CD8-positive, alpha-beta T cell (primary cell): ENCODE measurements at regions of chr20 and their contacts with region 1.

Region 1: DNA sequence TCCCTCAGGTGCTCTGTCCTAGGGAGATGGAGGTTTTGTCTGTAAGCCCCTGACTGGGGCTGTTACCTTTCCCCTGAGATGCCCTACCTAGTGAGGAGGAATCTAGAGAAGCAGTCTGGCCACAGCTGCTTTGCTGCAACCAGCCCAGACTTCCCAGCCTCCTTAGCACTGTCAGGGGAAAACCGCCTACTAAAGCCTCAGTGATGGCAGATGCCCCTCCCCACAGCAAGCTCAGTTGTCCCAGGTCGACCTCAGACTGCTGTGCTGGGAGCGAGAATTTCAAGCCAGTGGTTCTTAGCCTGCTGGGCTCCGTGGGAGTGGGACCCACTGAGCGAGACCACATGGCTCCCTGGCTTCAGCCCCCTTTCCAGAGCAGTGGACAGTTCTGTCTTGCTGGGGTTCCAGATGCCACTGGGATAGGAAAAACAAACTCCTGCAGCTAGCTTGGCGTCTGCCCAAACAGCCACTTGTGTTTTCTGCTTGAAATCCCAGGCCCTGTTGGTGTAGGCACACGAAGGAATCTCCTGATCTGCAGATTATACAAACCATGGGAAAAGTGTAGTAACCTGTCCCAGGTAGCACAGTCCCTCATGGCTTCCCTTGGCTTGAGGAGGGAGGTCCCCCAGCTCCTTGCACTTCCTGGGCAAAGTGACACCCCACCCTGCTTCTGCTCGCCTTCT is 146.4 kb upstream of the PROKR2 start:
- DNase-seq: no peak
- ATAC-seq: no peak
- H3K4me3 ChIP-seq: no peak overlapping the region
- H3K4me3 Mint-ChIP-seq: no peak overlapping the region
- H3K27ac ChIP-seq: no peak overlapping the region
- H3K27ac Mint-ChIP-seq: no peak overlapping the region
- H3K4me1 ChIP-seq: no peaks in the 10 kb centered on the region
- H3K4me1 Mint-ChIP-seq: no peaks in the 10 kb centered on the region
- H3K27me3 ChIP-seq: no peaks in the 10 kb centered on the region
- H3K27me3 Mint-ChIP-seq: peaks cover 35% of the 10 kb centered on the region
- CTCF ChIP-seq: no peak

Region 2: GRCh38 chr20:5090191-5090590 is 373.0 kb before region 1 on chr20:
- CTCF ChIA-PET with region 1: no interaction called
- POLR2A ChIA-PET with region 1: no interaction called
- intact Hi-C with region 1: no loop called
- DNase-seq: peak in 2 of 9 experiments; percentile 31 to 60
- ATAC-seq: no peak
- H3K4me3 ChIP-seq: no peak overlapping the region
- H3K4me3 Mint-ChIP-seq: no peak overlapping the region
- H3K27ac ChIP-seq: peak overlapping the region in 1 of 2 experiments; percentile 36
- H3K27ac Mint-ChIP-seq: peak overlapping the region; percentile 80
- H3K4me1 ChIP-seq: peaks cover 12% of the 10 kb centered on the region
- H3K4me1 Mint-ChIP-seq: peaks cover 9% of the 10 kb centered on the region
- H3K27me3 ChIP-seq: no peaks in the 10 kb centered on the region
- H3K27me3 Mint-ChIP-seq: no peaks in the 10 kb centered on the region
- CTCF ChIP-seq: no peak

Region 3: DNA sequence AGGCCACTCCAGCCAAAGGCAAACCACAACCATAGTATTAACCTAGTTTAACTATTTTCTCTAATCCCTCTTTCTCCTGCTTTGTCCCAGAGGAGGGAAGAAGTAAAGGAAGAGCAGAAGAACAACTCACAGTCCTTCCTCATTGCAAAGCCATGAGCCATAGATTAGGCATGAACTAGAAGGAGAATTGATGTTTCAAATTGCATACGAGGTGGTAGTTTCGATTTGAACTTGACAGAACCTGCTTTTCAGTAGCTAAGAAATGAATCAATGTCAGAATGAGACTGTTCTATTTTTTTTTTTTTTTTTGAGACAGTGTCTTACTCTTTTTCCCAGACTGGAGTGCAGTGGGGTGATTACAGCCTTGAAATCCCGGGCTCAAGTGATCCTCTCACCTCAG is 194.7 kb before region 1 on chr20:
- CTCF ChIA-PET with region 1: no interaction called
- POLR2A ChIA-PET with region 1: no interaction called
- intact Hi-C with region 1: no loop called
- DNase-seq: peak in 1 of 9 experiments; percentile 8
- ATAC-seq: no peak
- H3K4me3 ChIP-seq: no peak overlapping the region
- H3K4me3 Mint-ChIP-seq: no peak overlapping the region
- H3K27ac ChIP-seq: peak overlapping the region in 1 of 2 experiments; percentile 77
- H3K27ac Mint-ChIP-seq: no peak overlapping the region
- H3K4me1 ChIP-seq: peaks cover 5% of the 10 kb centered on the region
- H3K4me1 Mint-ChIP-seq: peaks cover 16% of the 10 kb centered on the region
- H3K27me3 ChIP-seq: no peaks in the 10 kb centered on the region
- H3K27me3 Mint-ChIP-seq: peaks cover 4% of the 10 kb centered on the region
- CTCF ChIP-seq: no peak

Region 4: DNA sequence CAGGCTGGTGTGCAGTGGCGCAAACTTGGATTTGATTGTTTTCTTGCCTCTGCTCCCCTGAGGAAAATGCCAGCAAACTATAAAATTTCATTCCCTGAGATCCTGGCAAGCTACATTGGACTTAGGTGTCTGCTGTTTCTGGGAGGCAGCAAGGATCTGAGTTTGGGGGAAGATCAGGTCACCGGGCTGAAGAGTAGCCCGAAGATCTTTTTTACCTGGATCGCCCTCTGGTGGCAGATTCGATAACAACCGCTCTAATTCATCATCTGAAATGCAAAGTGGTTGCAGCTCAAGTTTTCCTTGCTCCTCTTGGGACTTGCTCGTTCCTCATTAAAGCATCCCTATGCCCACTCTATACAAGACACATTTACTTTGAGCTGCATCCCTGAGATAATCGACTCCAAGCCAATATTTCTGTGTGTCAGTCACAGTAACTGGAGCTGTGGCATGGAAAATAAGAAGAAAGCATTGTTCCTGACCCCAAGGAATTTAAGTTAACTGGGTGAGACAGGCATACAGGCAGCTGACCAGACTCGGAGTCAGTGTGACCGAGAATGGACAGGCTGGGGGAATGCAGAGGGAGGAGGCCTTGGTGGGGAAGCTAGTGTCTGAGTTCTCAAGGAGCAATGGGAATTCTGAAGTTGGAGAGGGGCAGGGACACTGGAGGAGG is 14.6 kb before region 1 on chr20:
- CTCF ChIA-PET with region 1: interaction called, 10 read pairs
- POLR2A ChIA-PET with region 1: no interaction called
- intact Hi-C with region 1: no loop called
- DNase-seq: peak in 7 of 9 experiments; percentile 26 to 61 (median 52)
- ATAC-seq: no peak
- H3K4me3 ChIP-seq: no peak overlapping the region
- H3K4me3 Mint-ChIP-seq: no peak overlapping the region
- H3K27ac ChIP-seq: no peak overlapping the region
- H3K27ac Mint-ChIP-seq: no peak overlapping the region
- H3K4me1 ChIP-seq: no peaks in the 10 kb centered on the region
- H3K4me1 Mint-ChIP-seq: no peaks in the 10 kb centered on the region
- H3K27me3 ChIP-seq: peaks cover 0 to 2% of the 10 kb centered on the region in 2 experiments
- H3K27me3 Mint-ChIP-seq: peaks cover 15% of the 10 kb centered on the region
- CTCF ChIP-seq: peak; percentile 72